ENCODE measurements at regions of chr11 and their contacts with region 1.

Region 1: GRCh38 chr11:116853461-116854073 is 16.1 kb upstream of the APOA1 start:
- DNase-seq: peak; percentile 70
- H3K4me3 Mint-ChIP-seq: peak overlapping the region; percentile 73
- H3K27ac Mint-ChIP-seq: peak overlapping the region; percentile 92
- H3K4me1 Mint-ChIP-seq: peaks cover 64% of the 10 kb centered on the region
- H3K27me3 Mint-ChIP-seq: no peaks in the 10 kb centered on the region

Region 2: DNA sequence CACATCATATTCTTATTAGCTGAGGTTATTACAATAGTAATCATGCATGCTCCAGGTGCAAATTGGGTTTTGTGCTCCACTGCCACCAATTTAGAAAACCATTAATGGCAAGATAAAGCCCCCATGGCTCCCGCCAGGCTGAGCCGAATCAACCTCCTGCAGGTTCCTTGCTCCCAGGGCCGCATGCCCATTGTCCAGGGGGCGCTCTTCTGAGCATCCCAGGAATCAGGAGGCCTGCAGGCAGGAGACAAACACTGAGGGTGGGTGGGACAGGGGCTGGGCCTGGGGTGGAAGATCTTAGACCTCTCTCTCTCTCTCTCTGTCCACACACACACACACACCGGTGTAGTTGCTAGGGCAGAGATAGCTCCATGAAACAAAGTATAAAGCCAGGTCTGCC is 138.2 kb before region 1 on chr11:
- intact Hi-C with region 1: no loop called
- DNase-seq: no peak
- H3K4me3 Mint-ChIP-seq: no peak overlapping the region
- H3K27ac Mint-ChIP-seq: no peak overlapping the region
- H3K4me1 Mint-ChIP-seq: no peaks in the 10 kb centered on the region
- H3K27me3 Mint-ChIP-seq: peaks cover 3% of the 10 kb centered on the region

Region 3: GRCh38 chr11:116772443-116773202 is 80.9 kb before region 1 on chr11 and contains the start of gene BUD13:
- intact Hi-C with region 1: loop called (anchors 1 kb)
- DNase-seq: peak; percentile 93
- H3K4me3 Mint-ChIP-seq: peak within 1 kb of the TSS; percentile 99
- H3K27ac Mint-ChIP-seq: peak within 1 kb of the TSS; percentile 97
- H3K4me1 Mint-ChIP-seq: peaks cover 46% of the 10 kb centered on the region
- H3K27me3 Mint-ChIP-seq: no peaks in the 10 kb centered on the region
- total RNA-seq, gene BUD13: 30.0 and 33.4 TPM in 2 replicates

Region 4: DNA sequence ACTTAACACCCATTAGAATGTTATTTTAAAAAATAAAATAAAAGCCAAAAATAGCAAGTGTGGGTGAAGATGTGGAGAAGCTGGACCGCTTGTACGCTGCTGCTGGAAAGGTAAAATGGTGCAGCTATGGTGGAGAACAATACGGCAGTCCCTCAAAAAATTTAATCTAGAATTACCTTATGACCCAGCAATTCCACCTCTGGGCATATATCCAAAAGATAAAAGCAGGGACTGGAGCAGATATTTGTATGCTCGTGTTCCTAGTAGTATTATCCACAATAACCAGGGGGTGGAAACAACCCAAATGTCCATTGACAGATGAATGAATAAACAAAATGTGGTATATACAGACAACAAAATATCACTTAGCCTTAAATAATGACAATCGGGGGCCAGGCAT is 55.8 kb before region 1 on chr11:
- intact Hi-C with region 1: no loop called
- DNase-seq: no peak
- H3K4me3 Mint-ChIP-seq: no peak overlapping the region
- H3K27ac Mint-ChIP-seq: no peak overlapping the region
- H3K4me1 Mint-ChIP-seq: no peaks in the 10 kb centered on the region
- H3K27me3 Mint-ChIP-seq: peaks cover 22% of the 10 kb centered on the region

Region 5: GRCh38 chr11:116879800-116880625 is 26.4 kb after region 1 on chr11:
- intact Hi-C with region 1: loop called (anchors 2 kb)
- DNase-seq: no peak
- H3K4me3 Mint-ChIP-seq: no peak overlapping the region
- H3K27ac Mint-ChIP-seq: peak overlapping the region; percentile 66
- H3K4me1 Mint-ChIP-seq: peaks cover 25% of the 10 kb centered on the region
- H3K27me3 Mint-ChIP-seq: no peaks in the 10 kb centered on the region

Region 6: GRCh38 chr11:117020287-117020686 is 166.7 kb after region 1 on chr11:
- intact Hi-C with region 1: loop called (anchors 1 kb)
- DNase-seq: no peak
- H3K4me3 Mint-ChIP-seq: no peak overlapping the region
- H3K27ac Mint-ChIP-seq: peak overlapping the region; percentile 40
- H3K4me1 Mint-ChIP-seq: peaks cover 58% of the 10 kb centered on the region
- H3K27me3 Mint-ChIP-seq: no peaks in the 10 kb centered on the region

Region 7: DNA sequence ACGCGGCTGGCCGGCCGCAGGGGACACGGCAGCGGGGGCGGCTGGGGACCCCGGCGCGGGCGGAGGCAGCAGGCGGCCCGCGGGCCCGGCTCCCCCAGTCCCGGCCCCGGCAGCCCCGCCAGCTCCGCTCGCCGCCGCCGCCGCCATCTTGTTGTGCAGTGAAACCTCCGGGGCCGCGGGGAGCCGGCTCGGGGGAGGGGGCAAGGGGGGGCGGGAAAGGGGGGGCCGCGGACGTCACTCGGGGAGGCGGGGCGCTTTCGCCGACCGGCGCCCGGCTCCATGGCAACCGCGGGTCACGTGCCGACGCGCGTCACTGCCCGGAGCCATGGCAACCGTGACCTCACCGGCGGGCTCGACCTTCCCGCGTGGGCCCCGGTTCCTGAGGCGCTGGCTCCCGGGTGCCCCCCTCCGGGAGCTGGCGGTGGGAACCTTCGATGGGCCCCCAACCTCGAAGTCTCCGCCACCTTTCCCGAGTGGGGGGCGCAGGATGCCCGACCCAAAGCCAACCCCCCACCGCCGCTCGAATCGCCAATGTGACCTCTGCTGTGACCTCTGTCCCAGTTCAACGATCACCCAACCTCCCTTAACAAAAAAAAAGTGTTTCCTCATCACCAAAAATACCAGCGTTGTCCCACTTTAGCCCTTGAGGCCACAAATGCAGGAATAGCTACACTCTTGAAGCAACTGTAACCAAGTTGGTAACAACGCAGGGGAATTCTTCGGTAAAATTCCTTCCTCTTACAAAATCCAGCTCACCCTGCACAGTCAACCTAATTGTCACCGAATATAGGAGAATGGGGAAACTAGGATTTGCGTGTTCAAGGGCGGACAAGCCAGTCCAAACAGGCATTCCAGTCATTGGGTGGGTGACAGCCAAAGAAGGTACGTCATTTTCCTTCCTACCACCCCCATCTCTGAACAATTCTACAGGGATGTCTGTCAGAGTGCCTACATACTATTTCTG is 245.0 kb after region 1 on chr11 and contains the start of gene SIK3:
- intact Hi-C with region 1: loop called (anchors 1 kb)
- DNase-seq: peak; percentile 90
- H3K4me3 Mint-ChIP-seq: peak within 1 kb of the TSS; percentile 100
- H3K27ac Mint-ChIP-seq: peak within 1 kb of the TSS; percentile 99
- H3K4me1 Mint-ChIP-seq: peaks cover 50% of the 10 kb centered on the region
- H3K27me3 Mint-ChIP-seq: peaks cover 3% of the 10 kb centered on the region
- total RNA-seq, gene SIK3: 49.9 and 54.2 TPM in 2 replicates

Region 8: DNA sequence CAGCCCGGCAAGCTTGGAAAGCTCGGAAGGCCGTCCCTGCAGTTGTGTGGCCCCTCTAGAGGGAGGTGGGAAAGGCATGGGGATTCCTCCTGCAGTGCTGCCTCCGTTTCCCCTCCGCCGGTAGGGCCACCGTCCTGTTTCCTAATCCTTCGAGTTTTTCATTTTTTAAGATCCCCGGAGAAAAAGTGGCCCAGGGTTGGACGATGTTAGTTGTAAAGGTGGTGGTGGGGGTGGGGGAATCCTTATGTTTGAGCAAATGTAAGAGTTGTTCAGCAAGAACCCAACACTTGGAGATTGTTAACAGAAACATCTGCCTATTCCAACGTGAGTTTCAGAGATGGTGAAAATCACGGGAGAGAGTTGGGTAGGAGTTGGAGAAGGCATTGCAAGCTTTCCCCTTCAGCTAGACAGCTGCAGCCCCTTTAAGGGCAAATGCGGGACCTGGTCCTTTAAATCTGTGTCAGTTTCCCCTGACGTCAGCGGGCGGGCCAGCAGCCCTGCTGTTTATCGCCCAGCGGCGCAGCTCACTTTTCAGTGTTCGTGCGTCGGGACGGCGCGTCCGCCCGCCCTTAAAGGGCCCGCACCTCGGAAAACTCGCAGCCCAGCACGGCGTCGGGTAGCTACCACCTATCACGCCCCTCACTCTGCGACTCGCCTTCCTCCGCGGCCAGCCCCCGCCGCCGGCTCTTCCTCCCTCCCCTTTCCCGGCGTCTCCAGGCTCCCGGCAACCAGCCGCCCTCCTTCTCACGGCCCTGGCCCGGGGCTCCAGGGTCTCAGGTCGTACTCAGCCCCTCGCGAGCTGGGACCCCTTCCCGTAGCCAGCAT is 324.9 kb after region 1 on chr11 and contains the start of gene SIDT2:
- intact Hi-C with region 1: loop called (anchors 2 kb)
- DNase-seq: peak; percentile 89
- H3K4me3 Mint-ChIP-seq: peak within 1 kb of the TSS; percentile 95
- H3K27ac Mint-ChIP-seq: peak within 1 kb of the TSS; percentile 86
- H3K4me1 Mint-ChIP-seq: peaks cover 33% of the 10 kb centered on the region
- H3K27me3 Mint-ChIP-seq: no peaks in the 10 kb centered on the region
- total RNA-seq, gene SIDT2: 24.3 and 32.2 TPM in 2 replicates

Measured in activated T-helper 1 cell treated with anti-CD3 and anti-CD28 coated beads, Interleukin-12 subunit alpha, Interleukin-12 subunit beta, Interleukin-2, Interleukin-4 antibody, amounts not matched to agents 30 ng/mL and 10 ng/mL and 1 ng/mL, durations not matched to agents 14 hours and 24 hours and 36 hours (primary cell).